ENCODE measurements at regions of chr17 and their contacts with region 1.

Region 1: DNA sequence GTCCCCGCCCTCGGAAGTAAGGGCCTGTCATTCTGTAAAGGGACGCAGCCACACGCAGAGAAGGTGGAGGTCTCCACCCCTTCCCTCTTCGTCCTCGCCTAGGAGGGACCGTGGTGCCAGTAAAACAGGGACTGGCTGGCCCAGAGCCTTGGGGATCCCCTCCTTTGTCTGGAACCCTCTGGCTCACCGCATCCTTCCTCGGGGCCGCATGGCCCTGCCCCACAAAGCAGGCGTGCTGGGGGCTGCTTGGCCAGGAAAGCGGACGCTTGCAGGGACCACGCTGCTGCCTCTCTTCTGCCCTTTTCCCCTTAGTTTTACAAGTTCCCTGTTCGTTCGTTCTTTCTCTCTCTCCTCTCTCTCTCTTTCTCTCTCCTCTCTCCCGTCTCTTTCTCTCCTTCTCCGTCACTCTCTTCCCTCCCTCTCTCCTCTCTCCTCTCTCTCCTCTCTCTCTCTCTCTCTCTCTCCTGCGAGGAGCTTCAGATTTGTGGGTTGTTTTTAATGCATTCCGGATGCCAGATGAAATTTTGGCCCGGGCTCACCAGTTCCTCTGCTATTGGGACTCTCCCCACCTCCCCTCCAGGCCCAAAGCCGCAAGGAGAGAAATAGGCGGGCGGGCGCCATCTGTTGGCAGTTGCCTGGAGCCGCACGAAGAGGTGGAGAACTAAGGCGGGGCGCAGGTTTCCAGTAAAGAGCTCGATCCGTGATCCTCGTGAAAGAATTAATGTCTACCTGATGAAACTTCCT is 35.1 kb upstream of the CDRT4 start:
- DNase-seq: peak; percentile 80

Region 2: GRCh38 chr17:15257258-15257788 is 245.2 kb before region 1 on chr17:
- CTCF ChIA-PET with region 1: interaction called, 19 read pairs
- POLR2A ChIA-PET with region 1: interaction called, 3 read pairs
- DNase-seq: peak; percentile 75

Region 3: GRCh38 chr17:15475631-15476354 is 26.7 kb before region 1 on chr17:
- CTCF ChIA-PET with region 1: no interaction called
- POLR2A ChIA-PET with region 1: no interaction called
- DNase-seq: no peak

Measured in HEK293T (cell line).